Transverse colon (tissue), 4 donors: ENCODE measurements at regions of chr5 and their contacts with region 1.

Region 1: GRCh38 chr5:79837761-79838605 is 148.3 kb downstream of the CMYA5 start:
- DNase-seq: no peak
- H3K4me3 ChIP-seq: no peak overlapping the region
- H3K27ac ChIP-seq: peak overlapping the region in 1 of 4 donors; percentile 31
- H3K4me1 ChIP-seq: peaks cover 0 to 10% (median 2%) of the 10 kb centered on the region in 4 donors
- H3K27me3 ChIP-seq: no peaks in the 10 kb centered on the region
- CTCF ChIP-seq: no peak
- EP300 ChIP-seq: no peak
- POLR2A ChIP-seq: no peak

Region 2: DNA sequence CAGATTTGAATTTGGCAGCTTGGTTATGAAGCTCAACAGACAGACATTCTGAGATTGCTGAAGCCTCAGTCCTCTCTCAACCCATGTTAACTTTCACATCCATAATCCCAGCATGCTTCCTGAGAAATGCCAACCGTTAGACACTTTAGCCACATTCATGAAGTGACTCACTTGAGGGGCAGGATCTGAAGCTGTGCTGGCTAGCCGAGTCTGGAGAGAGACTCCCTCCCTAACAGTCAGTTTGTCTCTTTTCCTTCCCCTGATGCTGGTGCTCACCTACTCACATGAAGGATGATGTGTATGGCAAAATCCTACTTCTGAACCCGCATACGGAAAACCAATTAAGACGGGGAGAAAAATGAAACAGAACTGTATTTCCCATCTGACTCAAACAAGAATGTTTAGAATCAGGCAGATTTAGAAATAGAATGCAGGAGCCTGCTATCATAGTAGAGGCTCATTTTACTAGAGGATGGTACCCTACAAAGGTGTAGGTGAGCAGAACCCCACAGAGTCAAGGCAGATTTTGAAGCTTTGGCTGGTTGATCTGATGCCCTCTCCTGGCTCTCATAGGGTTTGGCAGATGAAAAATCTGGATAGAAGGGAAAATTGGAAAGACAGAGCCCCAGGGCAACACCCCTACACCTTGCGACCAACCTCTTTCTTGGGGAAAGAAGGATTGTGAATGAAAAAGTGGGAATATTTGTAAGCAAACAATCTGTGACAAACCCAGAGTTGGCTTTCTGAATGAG is 1038.5 kb before region 1 on chr5:
- in situ Hi-C with region 1: no loop called
- intact Hi-C with region 1: loop called (anchors 10 kb)
- DNase-seq: no peak
- H3K4me3 ChIP-seq: no peak overlapping the region
- H3K27ac ChIP-seq: no peak overlapping the region
- H3K4me1 ChIP-seq: no peaks in the 10 kb centered on the region
- H3K27me3 ChIP-seq: no peaks in the 10 kb centered on the region
- CTCF ChIP-seq: no peak
- EP300 ChIP-seq: no peak
- POLR2A ChIP-seq: no peak

Region 3: DNA sequence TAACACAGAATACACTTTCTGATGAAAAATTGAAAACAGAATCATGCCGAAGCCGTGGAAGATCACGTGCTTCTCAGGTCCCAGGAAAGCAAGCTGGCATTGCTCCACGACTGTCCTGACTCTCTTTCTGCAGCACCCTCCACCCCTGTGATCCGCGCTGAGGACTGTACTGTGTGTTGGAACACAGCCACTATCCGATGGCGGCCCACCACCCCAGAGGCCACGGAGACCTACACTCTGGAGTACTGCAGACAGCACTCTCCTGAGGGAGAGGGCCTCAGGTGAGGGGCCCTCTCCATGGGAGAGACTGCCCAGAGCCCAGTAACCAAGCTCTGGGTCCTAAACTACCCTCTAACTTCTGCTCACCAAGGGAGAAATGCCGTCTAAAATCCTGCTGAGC is 75.1 kb before region 1 on chr5:
- in situ Hi-C with region 1: no loop called
- intact Hi-C with region 1: loop called (anchors 10 kb)
- DNase-seq: no peak
- H3K4me3 ChIP-seq: no peak overlapping the region
- H3K27ac ChIP-seq: no peak overlapping the region
- H3K4me1 ChIP-seq: no peaks in the 10 kb centered on the region
- H3K27me3 ChIP-seq: no peaks in the 10 kb centered on the region
- CTCF ChIP-seq: no peak
- EP300 ChIP-seq: no peak
- POLR2A ChIP-seq: no peak